Posterior cingulate gyrus (tissue), 11 donors: ENCODE measurements at regions of chr15 and their contacts with region 1.

Region 1: GRCh38 chr15:38474155-38474757 is 20.3 kb downstream of the FAM98B start:
- DNase-seq: peak in 1 of 10 donors; percentile 14

Region 2: GRCh38 chr15:38547255-38547997 is 73.2 kb after region 1 on chr15:
- intact Hi-C with region 1: loop called (anchors 10 kb)
- DNase-seq: no peak

Region 3: GRCh38 chr15:38707802-38708671 is 233.8 kb after region 1 on chr15:
- intact Hi-C with region 1: no loop called
- DNase-seq: peak in 3 of 10 donors; percentile 18 to 33 (median 19)